ENCODE measurements at regions of chr10 and their contacts with region 1.

Region 1: GRCh38 chr10:72223743-72224101 is 7.6 kb upstream of the ASCC1 start:
- DNase-seq: no peak
- ATAC-seq: no peak
- H3K4me3 Mint-ChIP-seq: no peak overlapping the region
- H3K27ac Mint-ChIP-seq: peak overlapping the region; percentile 63
- H3K4me1 Mint-ChIP-seq: peaks cover 46% of the 10 kb centered on the region
- H3K27me3 Mint-ChIP-seq: no peaks in the 10 kb centered on the region

Region 2: DNA sequence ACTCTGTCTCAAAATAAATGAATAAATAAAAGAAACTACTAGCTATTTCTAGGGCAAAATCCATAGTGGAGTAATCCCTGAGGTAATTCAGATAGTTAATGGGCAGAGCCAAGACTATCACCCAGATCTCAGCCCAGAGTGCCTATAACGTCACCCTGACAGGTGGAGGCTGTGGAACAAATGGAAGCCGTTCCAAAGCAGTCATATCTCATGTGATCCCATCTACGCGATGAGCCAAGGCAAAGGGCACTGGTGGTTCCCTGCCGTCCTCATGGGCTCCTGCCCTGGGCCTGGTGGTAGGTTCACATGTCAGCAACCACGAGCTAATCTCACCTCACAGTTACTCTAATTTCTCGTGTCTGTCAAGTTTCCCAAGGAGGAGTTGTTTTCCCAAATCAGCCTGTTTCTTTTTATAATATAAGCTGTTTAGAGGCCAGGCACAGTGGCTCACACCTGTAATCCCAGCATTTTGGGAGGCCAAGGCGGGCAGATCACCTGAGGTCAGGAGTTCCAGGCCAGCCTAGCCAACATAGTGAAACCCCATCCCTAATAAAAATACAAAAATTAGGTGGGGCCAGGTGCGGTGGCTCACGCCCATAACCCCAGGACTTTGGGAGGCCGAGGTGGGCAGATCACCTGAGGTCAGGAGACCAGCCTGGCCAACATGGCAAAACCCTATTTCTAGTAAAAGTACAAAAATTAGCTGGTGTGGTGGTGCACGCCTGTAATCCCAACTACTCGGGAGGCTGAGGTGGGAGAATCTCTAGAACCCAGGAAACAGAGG is 14.9 kb after region 1 on chr10:
- CTCF ChIA-PET with region 1: interaction called, 15 read pairs
- DNase-seq: no peak
- ATAC-seq: no peak
- H3K4me3 Mint-ChIP-seq: no peak overlapping the region
- H3K27ac Mint-ChIP-seq: no peak overlapping the region
- H3K4me1 Mint-ChIP-seq: peaks cover 15% of the 10 kb centered on the region
- H3K27me3 Mint-ChIP-seq: no peaks in the 10 kb centered on the region

Region 3: DNA sequence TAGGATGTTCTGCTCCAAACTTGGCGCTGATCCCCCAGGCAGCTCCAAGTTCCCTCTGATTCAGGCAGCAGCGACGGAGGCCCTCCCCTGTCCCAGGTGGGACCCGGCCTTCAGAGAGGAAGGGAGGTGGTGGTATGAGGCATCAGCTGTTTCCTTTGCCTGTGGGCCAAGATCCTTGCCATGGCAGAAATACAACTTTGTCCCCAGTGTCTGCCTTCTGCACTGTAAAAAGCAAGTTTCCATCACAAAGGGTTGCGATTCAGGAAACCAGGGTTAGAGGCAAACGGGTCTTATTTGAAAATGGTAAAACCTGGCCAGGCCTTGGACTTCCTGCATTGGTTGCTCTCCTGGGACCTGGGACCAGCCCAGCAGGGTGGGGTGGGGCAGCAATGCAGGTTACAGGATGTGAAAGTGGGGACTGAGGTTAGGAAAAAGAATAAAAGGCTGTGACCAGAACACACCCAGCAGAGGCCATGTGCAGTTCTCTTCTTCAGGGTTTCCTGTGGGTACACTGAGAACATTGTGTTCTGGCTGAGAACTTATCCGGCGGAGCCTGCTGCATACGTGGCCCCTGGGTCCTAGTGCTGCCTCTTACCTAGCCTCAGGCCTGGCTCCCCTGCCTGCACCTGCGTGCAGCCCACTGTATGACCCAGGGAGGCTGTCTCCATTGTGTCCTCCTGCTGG is 24.9 kb after region 1 on chr10:
- CTCF ChIA-PET with region 1: interaction called, 14 read pairs
- DNase-seq: peak; percentile 93
- ATAC-seq: peak; percentile 91
- H3K4me3 Mint-ChIP-seq: peak overlapping the region; percentile 69
- H3K27ac Mint-ChIP-seq: peak overlapping the region; percentile 92
- H3K4me1 Mint-ChIP-seq: peaks cover 76% of the 10 kb centered on the region
- H3K27me3 Mint-ChIP-seq: no peaks in the 10 kb centered on the region

Measured in activated CD8-positive, alpha-beta memory T cell treated with anti-CD3 and anti-CD28 coated beads, Interleukin-2, amount 10 ng/mL, durations not matched to agents 7 days and 5 days (primary cell).